WTC11 (cell line): ENCODE measurements at regions of chr6 and their contacts with region 1.

Region 1: DNA sequence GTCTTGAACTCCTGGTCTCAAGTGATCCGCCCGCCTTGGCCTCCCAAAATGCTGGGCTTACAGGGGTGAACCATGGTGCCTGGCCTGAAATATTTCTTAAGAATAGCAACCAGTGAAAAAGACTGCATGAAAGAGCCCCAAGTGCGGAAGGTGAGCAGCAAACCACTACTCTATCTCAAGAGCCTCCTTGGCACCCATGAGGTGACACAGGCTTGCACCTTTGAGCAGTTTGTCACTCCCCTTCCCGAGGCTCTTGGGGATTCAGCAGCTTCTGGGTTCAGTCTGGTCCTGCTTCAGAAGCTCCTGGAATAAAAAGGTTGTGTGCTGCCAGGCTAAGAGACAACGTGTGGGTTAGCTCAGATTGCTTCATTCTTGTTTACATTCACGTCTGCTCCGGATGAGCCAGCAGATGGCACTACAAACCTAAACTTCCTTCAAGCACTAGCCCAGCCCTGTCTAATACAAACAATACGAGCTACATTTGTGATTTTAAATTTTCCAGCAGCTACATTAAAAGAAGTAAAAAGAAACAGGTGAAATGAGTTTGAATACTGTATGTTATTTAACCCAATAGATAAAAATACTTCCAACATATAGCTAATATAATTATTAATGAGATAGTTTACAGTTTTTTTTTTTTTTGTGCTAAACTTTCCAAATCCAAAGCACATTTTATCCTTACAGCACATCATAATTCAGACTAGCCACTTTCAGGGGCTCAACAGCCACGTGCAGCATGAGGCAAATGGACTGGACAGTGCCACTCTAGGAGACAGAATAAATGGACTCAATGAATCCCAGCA is 46.2 kb downstream of the GJA10 start:
- DNase-seq: peak; percentile 63
- ATAC-seq: peak; percentile 97
- H3K4me3 Mint-ChIP-seq: no peak overlapping the region
- H3K27ac Mint-ChIP-seq: no peak overlapping the region
- H3K4me1 Mint-ChIP-seq: no peaks in the 10 kb centered on the region
- H3K27me3 Mint-ChIP-seq: no peaks in the 10 kb centered on the region
- CTCF ChIP-seq: peak; percentile 14; the same call in 1 of the 2 replicates

Region 2: DNA sequence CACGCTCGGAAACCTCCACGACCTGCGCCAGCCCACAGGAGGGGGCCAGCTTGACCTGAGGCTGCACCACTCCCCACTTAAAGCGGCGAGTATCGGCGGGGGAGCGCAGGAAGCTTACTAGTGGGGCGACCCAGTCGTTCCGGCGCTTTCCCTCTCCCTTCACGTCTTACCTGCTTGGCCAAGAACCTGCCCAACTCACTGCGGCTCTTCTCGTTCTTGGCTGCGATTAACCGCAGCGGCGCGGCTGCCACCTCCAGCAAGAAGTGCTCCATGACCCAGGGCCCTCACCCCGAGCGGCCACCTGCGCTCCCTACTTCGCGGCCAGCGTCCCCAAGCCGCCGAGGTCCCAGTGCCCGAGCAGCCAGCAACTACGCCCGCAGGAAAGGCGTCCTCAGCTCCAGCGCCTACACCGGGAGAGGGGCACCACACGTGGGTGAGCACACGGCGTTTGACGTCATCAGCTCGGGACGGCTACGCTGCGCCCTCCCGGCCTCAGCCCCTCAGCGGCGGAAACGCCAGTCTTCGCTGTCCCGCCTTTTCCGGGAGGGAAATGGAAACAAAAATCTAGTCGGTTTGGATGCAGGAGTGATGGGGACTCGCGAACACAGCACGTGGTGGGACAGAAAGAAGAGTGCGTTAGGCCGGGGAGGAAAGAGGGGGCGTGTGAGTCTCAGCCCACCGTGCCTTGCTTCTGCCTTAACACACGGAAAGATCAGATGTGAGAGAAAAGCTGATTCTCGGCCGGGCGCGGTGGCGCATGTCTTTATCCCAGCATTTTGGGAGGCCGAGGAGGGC is 120.9 kb before region 1 on chr6 and contains the start of gene MDN1:
- CTCF ChIA-PET with region 1: no interaction called
- POLR2A ChIA-PET with region 1: no interaction called
- DNase-seq: peak; percentile 91
- ATAC-seq: peak; percentile 78
- H3K4me3 Mint-ChIP-seq: peak within 1 kb of the TSS; percentile 92
- H3K27ac Mint-ChIP-seq: peak within 1 kb of the TSS; percentile 98
- H3K4me1 Mint-ChIP-seq: peaks cover 43% of the 10 kb centered on the region
- H3K27me3 Mint-ChIP-seq: no peaks in the 10 kb centered on the region
- CTCF ChIP-seq: no peak
- total RNA-seq, gene MDN1: 146 to 195 TPM (median 146 TPM) in 3 replicates

Region 3: DNA sequence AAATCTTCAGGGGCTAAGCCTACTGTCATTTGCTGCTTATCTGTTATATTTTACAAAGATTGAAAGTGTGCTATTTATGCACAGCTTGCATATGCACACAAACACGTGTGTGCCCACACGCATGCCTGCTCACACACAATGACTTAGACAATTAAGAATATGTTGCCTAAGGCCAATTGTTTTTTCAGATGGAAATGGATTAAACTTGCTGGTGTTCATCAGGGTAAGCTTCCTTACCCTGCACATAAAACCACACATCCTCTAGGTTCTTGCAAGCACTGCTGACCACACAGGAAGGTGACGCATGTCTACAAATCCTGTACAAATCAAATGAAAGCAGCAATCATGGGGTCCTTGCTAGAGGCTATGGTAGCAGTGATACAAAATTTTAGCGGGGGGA is 12.3 kb after region 1 on chr6:
- CTCF ChIA-PET with region 1: interaction called, 42 read pairs
- POLR2A ChIA-PET with region 1: no interaction called
- DNase-seq: no peak
- ATAC-seq: no peak
- H3K4me3 Mint-ChIP-seq: no peak overlapping the region
- H3K27ac Mint-ChIP-seq: no peak overlapping the region
- H3K4me1 Mint-ChIP-seq: peaks cover 6% of the 10 kb centered on the region
- H3K27me3 Mint-ChIP-seq: no peaks in the 10 kb centered on the region
- CTCF ChIP-seq: no peak

Region 4: DNA sequence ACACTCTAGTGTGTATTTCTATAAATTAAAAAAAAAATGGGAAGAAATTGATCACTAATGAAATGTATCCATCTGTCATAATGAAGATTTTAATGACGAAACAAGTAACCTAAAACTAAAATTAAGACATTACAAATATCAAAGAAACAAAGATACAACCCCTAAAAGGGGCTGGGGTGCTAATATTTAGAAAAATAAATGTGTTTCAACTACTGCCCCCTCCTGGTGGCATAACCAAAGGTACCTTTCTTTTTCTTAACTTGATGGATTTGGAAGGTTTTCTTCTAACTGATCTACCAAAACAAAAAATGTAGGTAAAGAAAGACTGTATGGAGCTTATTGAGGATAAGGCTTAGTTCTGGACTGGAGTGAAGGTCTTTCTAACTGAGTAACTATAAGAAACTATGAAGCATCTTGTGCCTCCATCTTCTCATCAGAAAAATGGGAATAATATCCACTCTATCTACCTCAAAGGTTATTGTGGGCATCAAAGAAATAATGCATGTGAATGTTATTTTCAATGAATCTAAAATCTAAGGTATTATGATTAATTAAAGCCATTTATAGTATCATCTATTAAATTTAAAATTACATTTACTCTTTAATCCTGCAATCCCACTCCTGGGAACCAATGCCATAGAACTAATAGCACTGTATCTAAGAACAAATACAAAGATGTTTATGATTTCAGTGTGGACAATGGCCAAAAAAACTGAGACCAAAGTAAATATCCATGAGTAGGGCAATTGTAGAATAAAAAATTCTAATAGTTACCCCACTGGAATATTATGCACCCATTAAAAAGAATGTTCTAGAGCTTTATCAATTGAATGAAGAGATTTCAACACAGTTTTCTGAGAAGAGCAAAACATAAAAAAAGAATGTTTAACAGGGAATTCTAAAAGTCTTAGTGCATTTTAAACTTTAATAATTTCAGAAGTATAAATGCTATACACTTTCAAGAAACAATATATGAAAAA is 239.1 kb after region 1 on chr6:
- CTCF ChIA-PET with region 1: interaction called, 31 read pairs
- POLR2A ChIA-PET with region 1: no interaction called
- DNase-seq: no peak
- ATAC-seq: no peak
- H3K4me3 Mint-ChIP-seq: no peak overlapping the region
- H3K27ac Mint-ChIP-seq: no peak overlapping the region
- H3K4me1 Mint-ChIP-seq: peaks cover 6% of the 10 kb centered on the region; the same call in 1 of the 2 replicates
- H3K27me3 Mint-ChIP-seq: no peaks in the 10 kb centered on the region
- CTCF ChIP-seq: peak; percentile 60

Region 5: DNA sequence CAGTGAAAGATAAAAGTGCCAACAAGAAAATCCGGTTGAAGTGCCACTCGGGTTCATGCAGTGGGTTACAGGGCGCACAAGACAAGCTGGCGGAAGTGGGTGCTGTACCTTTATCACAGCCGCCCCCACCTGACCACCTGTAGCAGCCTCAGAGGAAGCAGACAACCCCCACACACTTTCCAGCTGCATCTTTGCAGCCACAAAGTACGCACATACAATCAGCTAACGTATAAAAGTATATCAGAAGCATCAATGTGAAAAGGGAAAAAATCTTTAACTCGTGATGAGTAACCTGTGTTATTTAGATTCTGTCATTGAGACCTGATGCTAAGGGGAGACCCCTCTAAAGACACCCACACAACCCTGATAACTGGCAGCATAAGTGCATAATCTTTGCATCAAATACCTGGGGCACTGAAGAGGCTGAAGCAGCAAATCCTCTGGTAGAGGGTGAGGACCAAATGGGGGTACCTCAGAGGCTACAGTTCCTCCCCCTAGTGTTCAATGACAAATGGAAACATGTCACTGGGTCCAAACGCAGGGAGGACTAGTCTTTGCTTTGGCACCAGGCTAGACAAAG is 334.1 kb after region 1 on chr6:
- CTCF ChIA-PET with region 1: interaction called, 10 read pairs
- POLR2A ChIA-PET with region 1: no interaction called
- DNase-seq: no peak
- ATAC-seq: peak; percentile 85
- H3K4me3 Mint-ChIP-seq: no peak overlapping the region
- H3K27ac Mint-ChIP-seq: no peak overlapping the region
- H3K4me1 Mint-ChIP-seq: no peaks in the 10 kb centered on the region
- H3K27me3 Mint-ChIP-seq: no peaks in the 10 kb centered on the region
- CTCF ChIP-seq: peak; percentile 24; the same call in 1 of the 2 replicates

Region 6: DNA sequence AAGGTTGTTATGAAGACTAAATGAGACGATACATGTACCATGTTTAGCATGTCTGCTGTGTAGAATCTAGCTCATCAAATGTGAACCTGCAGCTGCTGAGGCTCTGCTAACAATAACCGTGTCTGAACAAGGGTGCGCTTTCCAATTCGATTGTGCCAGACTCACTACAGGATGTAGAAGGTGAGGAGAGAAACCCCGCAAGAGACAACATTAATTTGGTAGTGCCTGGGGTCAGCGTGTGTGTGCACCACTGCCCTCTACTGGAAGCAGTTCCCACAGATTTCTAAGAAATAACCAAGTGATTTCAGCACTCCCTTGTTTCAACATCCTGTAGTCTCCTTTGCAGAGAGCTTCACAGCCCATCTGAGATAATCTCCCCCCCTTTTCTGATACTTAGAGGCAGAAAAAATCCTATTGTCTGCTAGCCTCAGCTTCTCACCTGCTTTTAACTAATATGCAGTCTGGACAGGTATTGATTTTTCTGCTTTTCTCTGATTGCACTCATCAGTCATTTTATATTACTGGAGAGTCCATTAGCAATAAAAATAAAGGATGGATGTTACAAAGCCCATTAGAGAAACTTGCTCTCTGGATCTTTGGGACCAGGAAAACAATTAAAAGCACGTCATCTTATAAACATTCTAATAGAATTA is 452.9 kb after region 1 on chr6:
- CTCF ChIA-PET with region 1: interaction called, 12 read pairs
- POLR2A ChIA-PET with region 1: no interaction called
- DNase-seq: peak; percentile 69
- ATAC-seq: peak; percentile 92
- H3K4me3 Mint-ChIP-seq: no peak overlapping the region
- H3K27ac Mint-ChIP-seq: no peak overlapping the region
- H3K4me1 Mint-ChIP-seq: peaks cover 26% of the 10 kb centered on the region
- H3K27me3 Mint-ChIP-seq: peaks cover 2% of the 10 kb centered on the region; the same call in 1 of the 2 replicates
- CTCF ChIP-seq: peak; percentile 56

Region 7: GRCh38 chr6:90478789-90479602 is 538.6 kb after region 1 on chr6:
- CTCF ChIA-PET with region 1: interaction called, 124 read pairs
- POLR2A ChIA-PET with region 1: interaction called, 4 read pairs
- DNase-seq: peak; percentile 81
- ATAC-seq: peak; percentile 89
- H3K4me3 Mint-ChIP-seq: no peak overlapping the region; the same call in 1 of the 2 replicates
- H3K27ac Mint-ChIP-seq: peak overlapping the region; percentile 43
- H3K4me1 Mint-ChIP-seq: peaks cover 33% of the 10 kb centered on the region
- H3K27me3 Mint-ChIP-seq: no peaks in the 10 kb centered on the region
- CTCF ChIP-seq: peak; percentile 86